ENCODE measurements at regions of chr4 and their contacts with region 1.

Region 1: GRCh38 chr4:88659055-88659889 is 38.4 kb downstream of the NAP1L5 start:
- DNase-seq: no peak
- ATAC-seq: peak; percentile 52
- H3K4me3 Mint-ChIP-seq: no peak overlapping the region
- H3K27ac Mint-ChIP-seq: no peak overlapping the region
- H3K4me1 Mint-ChIP-seq: no peaks in the 10 kb centered on the region
- H3K27me3 Mint-ChIP-seq: no peaks in the 10 kb centered on the region
- CTCF ChIP-seq: no peak

Region 2: DNA sequence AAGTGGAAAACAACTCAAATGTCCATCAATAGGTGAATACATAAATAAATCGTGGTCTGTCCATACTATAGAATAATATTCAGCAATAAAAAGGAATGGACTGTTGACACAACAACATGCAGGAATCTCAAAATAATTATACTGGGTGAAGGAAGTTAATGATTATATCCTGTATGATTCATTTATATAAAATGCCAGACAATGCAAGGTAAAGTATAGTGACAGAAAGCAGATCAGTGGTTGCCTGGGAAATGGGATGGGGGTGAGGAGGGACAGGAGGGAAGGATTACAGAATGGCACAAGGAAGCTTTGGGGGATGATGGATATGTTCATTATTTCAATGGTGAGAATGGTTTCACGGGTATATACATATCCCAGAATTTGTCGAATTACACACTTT is 148.0 kb before region 1 on chr4:
- CTCF ChIA-PET with region 1: no interaction called
- POLR2A ChIA-PET with region 1: no interaction called
- intact Hi-C with region 1: no loop called
- DNase-seq: no peak
- ATAC-seq: no peak
- H3K4me3 Mint-ChIP-seq: no peak overlapping the region
- H3K27ac Mint-ChIP-seq: no peak overlapping the region
- H3K4me1 Mint-ChIP-seq: no peaks in the 10 kb centered on the region
- H3K27me3 Mint-ChIP-seq: no peaks in the 10 kb centered on the region
- CTCF ChIP-seq: no peak

Region 3: GRCh38 chr4:88523325-88524129 is 135.7 kb before region 1 on chr4 and contains the start of gene PYURF:
- CTCF ChIA-PET with region 1: interaction called, 9 read pairs
- POLR2A ChIA-PET with region 1: no interaction called
- intact Hi-C with region 1: loop called (anchors 1 kb)
- DNase-seq: peak; percentile 72
- ATAC-seq: peak; percentile 84
- H3K4me3 Mint-ChIP-seq: peak within 1 kb of the TSS; percentile 95
- H3K27ac Mint-ChIP-seq: peak within 1 kb of the TSS; percentile 85
- H3K4me1 Mint-ChIP-seq: peaks cover 18% of the 10 kb centered on the region
- H3K27me3 Mint-ChIP-seq: no peaks in the 10 kb centered on the region
- CTCF ChIP-seq: no peak
- total RNA-seq, gene PYURF: 42.2 and 48.3 TPM in 2 replicates

Region 4: DNA sequence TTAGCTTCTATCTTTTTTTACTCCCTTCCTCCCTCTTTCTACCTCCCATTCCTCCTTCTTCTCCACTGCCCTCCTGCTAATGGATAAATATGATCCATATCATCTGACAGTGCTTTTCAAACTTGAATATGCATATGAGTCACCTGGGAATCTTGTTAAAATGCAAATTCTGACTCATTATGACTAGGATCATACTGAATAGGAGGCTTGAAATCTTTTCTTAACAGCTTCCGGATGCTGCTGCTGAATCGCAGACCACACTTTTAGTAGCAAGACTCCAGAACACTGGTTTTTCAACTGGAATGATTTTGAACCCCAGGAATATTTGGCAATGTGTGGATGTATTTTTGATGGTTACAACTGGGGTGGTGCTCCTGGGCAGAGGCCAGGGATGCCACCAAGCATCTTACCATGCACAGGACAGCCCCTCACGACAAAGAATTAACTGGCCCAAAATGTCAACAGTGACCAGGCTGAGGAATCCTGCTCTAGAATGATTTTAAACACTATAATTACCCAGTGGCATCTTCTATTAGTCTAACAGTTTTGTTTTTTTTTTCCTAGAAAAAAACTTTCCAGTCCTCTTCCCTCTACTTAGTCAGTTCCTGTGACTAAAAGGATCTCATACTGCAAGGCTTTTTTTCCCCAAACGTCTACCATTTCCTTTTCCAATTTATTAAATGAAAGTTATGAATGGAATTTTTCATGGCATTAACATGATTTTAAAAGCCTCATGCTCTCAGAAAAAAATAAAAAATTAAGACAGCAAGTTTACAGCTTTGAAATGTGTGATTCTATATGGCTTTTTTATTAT is 125.1 kb before region 1 on chr4:
- CTCF ChIA-PET with region 1: interaction called, 17 read pairs
- POLR2A ChIA-PET with region 1: no interaction called
- intact Hi-C with region 1: loop called (anchors 1 kb)
- DNase-seq: no peak
- ATAC-seq: no peak
- H3K4me3 Mint-ChIP-seq: no peak overlapping the region
- H3K27ac Mint-ChIP-seq: no peak overlapping the region
- H3K4me1 Mint-ChIP-seq: no peaks in the 10 kb centered on the region
- H3K27me3 Mint-ChIP-seq: no peaks in the 10 kb centered on the region
- CTCF ChIP-seq: no peak

Region 5: DNA sequence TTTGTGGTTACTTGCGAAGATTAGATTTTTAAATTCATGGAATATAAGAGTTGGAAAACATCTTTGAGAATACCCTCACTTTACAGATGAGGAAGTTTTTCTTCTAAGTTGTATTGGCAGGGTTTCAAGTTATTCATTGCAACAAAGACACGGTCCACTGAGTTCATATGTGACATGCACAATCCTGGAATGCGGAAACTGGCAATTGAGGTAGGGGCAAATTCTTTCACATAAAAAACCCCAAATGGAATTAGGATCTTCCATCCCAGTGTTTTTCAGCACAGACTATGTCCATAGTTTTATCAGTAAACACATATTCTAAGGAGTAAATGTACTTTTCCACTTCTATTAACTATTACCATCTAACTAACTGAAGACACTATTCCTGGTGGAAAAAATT is 120.2 kb after region 1 on chr4:
- CTCF ChIA-PET with region 1: no interaction called
- POLR2A ChIA-PET with region 1: no interaction called
- intact Hi-C with region 1: no loop called
- DNase-seq: no peak
- ATAC-seq: no peak
- H3K4me3 Mint-ChIP-seq: no peak overlapping the region
- H3K27ac Mint-ChIP-seq: no peak overlapping the region
- H3K4me1 Mint-ChIP-seq: no peaks in the 10 kb centered on the region
- H3K27me3 Mint-ChIP-seq: no peaks in the 10 kb centered on the region
- CTCF ChIP-seq: no peak

Measured in activated B cell treated with CpG ODN at 0.5 μM for 24 hours (primary cell).